IMR-90 (cell line): ENCODE measurements at regions of chr20 and their contacts with region 1.

Region 1: DNA sequence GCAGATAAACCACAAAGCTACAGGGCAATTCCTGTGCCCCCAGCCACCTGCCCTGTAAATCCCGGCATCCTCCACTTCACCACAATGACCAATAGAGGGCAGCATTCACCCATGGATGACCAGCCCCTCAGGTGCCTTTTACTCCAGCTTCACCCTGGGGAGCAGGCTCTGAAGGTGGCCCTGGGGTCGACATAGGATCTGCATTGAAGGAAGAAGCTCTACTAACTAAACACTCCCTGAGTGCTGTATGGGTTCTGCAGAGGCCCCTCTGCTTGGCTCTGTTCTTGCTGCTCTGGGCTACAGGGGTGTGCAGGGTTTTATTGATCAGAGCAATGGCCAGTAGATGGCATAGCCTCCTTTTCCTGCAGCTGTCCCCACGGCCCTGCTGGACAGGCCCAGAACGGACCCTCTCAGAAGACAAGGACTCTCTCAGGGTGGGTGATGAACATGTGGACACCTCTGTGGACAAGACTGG is 20.3 kb downstream of the CST4 start:
- DNase-seq: peak; percentile 50
- ATAC-seq: peak; percentile 94
- H3K4me3 ChIP-seq: no peak overlapping the region
- H3K27ac ChIP-seq: no peak overlapping the region
- H3K4me1 ChIP-seq: no peaks in the 10 kb centered on the region
- H3K27me3 ChIP-seq: peaks cover 8% of the 10 kb centered on the region
- CTCF ChIP-seq: peak; percentile 80
- POLR2A ChIP-seq: no peak
- RAD21 ChIP-seq: peak; percentile 86

Region 2: GRCh38 chr20:23441850-23442313 is 226.6 kb before region 1 on chr20:
- CTCF ChIA-PET with region 1: no interaction called
- POLR2A ChIA-PET with region 1: no interaction called
- dilution Hi-C with region 1: no loop called
- in situ Hi-C with region 1: no loop called
- intact Hi-C with region 1: loop called (anchors 5 kb)
- DNase-seq: peak; percentile 72
- ATAC-seq: peak; percentile 85
- H3K4me3 ChIP-seq: no peak overlapping the region
- H3K27ac ChIP-seq: no peak overlapping the region
- H3K4me1 ChIP-seq: 0 out of 2 replicates have a peak, but pooled peaks cover 3% of the 10 kb centered on the region
- H3K27me3 ChIP-seq: peaks cover 3% of the 10 kb centered on the region; the same call in 1 of the 2 replicates
- CTCF ChIP-seq: peak; percentile 85
- POLR2A ChIP-seq: no peak
- RAD21 ChIP-seq: peak; percentile 78

Region 3: GRCh38 chr20:23727016-23727415 is 58.5 kb after region 1 on chr20:
- CTCF ChIA-PET with region 1: interaction called, 5 read pairs
- POLR2A ChIA-PET with region 1: no interaction called
- dilution Hi-C with region 1: no loop called
- in situ Hi-C with region 1: no loop called
- intact Hi-C with region 1: loop called (anchors 10 kb)
- DNase-seq: no peak
- ATAC-seq: no peak
- H3K4me3 ChIP-seq: no peak overlapping the region
- H3K27ac ChIP-seq: no peak overlapping the region
- H3K4me1 ChIP-seq: no peaks in the 10 kb centered on the region
- H3K27me3 ChIP-seq: peaks cover 2% of the 10 kb centered on the region
- CTCF ChIP-seq: no peak
- POLR2A ChIP-seq: no peak
- RAD21 ChIP-seq: no peak

Region 4: GRCh38 chr20:23794841-23795240 is 126.3 kb after region 1 on chr20:
- CTCF ChIA-PET with region 1: no interaction called
- POLR2A ChIA-PET with region 1: no interaction called
- dilution Hi-C with region 1: no loop called
- in situ Hi-C with region 1: no loop called
- intact Hi-C with region 1: loop called (anchors 1 kb)
- DNase-seq: no peak
- ATAC-seq: no peak
- H3K4me3 ChIP-seq: no peak overlapping the region
- H3K27ac ChIP-seq: no peak overlapping the region
- H3K4me1 ChIP-seq: no peaks in the 10 kb centered on the region
- H3K27me3 ChIP-seq: peaks cover 2% of the 10 kb centered on the region
- CTCF ChIP-seq: no peak
- POLR2A ChIP-seq: no peak
- RAD21 ChIP-seq: no peak

Region 5: DNA sequence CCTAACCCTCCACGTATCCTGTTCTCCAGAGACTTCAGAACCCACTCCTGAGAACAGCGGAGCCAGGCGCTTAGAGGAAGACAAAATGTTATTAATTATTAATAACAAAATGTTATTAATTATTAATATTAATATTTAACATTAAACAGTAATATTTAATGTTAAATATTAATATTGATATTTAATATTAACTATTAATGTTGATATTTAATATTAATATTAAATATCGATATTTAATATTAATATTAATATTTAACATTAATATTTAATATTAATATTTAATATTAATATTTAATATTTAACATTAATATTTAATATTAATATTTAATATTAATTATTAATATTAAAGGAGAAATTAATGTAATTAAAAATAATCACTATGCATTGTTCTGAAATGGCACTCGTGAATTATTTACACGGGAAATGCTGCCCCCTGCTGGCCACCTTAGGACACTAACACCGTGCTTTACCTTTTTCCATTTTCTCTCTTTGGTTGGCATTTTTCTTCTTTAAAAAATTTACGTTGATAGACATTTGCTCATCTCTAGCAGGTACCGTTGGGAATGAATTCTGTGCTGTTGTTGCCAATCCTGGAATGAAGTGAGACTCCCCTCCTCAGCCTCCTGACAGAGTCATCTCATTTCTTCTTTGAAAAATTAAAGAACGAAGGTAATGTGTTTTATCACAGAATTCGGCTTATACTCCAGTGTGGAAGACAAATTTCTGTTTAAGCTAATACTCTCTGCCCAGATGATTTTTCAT is 327.6 kb after region 1 on chr20:
- CTCF ChIA-PET with region 1: interaction called, 3 read pairs
- POLR2A ChIA-PET with region 1: no interaction called
- dilution Hi-C with region 1: no loop called
- in situ Hi-C with region 1: loop called (anchors 10 kb)
- intact Hi-C with region 1: no loop called
- DNase-seq: peak; percentile 24
- ATAC-seq: peak; percentile 54
- H3K4me3 ChIP-seq: no peak overlapping the region
- H3K27ac ChIP-seq: no peak overlapping the region
- H3K4me1 ChIP-seq: no peaks in the 10 kb centered on the region
- H3K27me3 ChIP-seq: no peaks in the 10 kb centered on the region; the same call in 1 of the 2 replicates
- CTCF ChIP-seq: peak; percentile 75
- POLR2A ChIP-seq: no peak
- RAD21 ChIP-seq: peak; percentile 50

Region 6: GRCh38 chr20:24100385-24101011 is 432.0 kb after region 1 on chr20:
- CTCF ChIA-PET with region 1: no interaction called
- POLR2A ChIA-PET with region 1: no interaction called
- dilution Hi-C with region 1: no loop called
- in situ Hi-C with region 1: no loop called
- intact Hi-C with region 1: loop called (anchors 2 kb)
- DNase-seq: peak; percentile 47
- ATAC-seq: peak; percentile 80; the same call in 1 of the 2 replicates
- H3K4me3 ChIP-seq: no peak overlapping the region
- H3K27ac ChIP-seq: no peak overlapping the region
- H3K4me1 ChIP-seq: no peaks in the 10 kb centered on the region
- H3K27me3 ChIP-seq: no peaks in the 10 kb centered on the region; the same call in 1 of the 2 replicates
- CTCF ChIP-seq: peak; percentile 58
- POLR2A ChIP-seq: no peak
- RAD21 ChIP-seq: 0 out of 2 replicates have a peak, but pooled peaks have one; percentile 15

Region 7: GRCh38 chr20:24364482-24364881 is 696.0 kb after region 1 on chr20:
- CTCF ChIA-PET with region 1: no interaction called
- POLR2A ChIA-PET with region 1: no interaction called
- dilution Hi-C with region 1: no loop called
- in situ Hi-C with region 1: no loop called
- intact Hi-C with region 1: no loop called
- DNase-seq: no peak
- ATAC-seq: no peak
- H3K4me3 ChIP-seq: no peak overlapping the region
- H3K27ac ChIP-seq: no peak overlapping the region
- H3K4me1 ChIP-seq: no peaks in the 10 kb centered on the region
- H3K27me3 ChIP-seq: no peaks in the 10 kb centered on the region
- CTCF ChIP-seq: no peak
- POLR2A ChIP-seq: no peak
- RAD21 ChIP-seq: no peak